Heart left ventricle (tissue), 16 donors: ENCODE measurements at regions of chr4 and their contacts with region 1.

Region 1: GRCh38 chr4:158768555-158769174 is at the start of gene FNIP2:
- DNase-seq: peak; percentile 86 to 92 (median 90)
- ATAC-seq: peak; percentile 89 to 97 (median 94)
- H3K4me3 ChIP-seq: peak within 1 kb of the TSS; percentile 70 to 97 (median 92)
- H3K27ac ChIP-seq: peak within 1 kb of the TSS; percentile 83 to 95 (median 91)
- H3K4me1 ChIP-seq: peaks cover 7 to 58% (median 43%) of the 10 kb centered on the region in 12 donors
- H3K27me3 ChIP-seq: no peaks in the 10 kb centered on the region
- CTCF ChIP-seq: peak in 1 of 12 donors; percentile 6
- POLR2A ChIP-seq: peak in 1 of 2 donors; percentile 69
- total RNA-seq, gene FNIP2: 32.4 to 87.4 (median 44.7) TPM

Region 2: GRCh38 chr4:158722917-158723793 is 45.5 kb before region 1 on chr4 and contains the start of gene PPID:
- intact Hi-C with region 1: loop called in 2 of 10 experiments (anchors 5 kb)
- DNase-seq: peak; percentile 86 to 92 (median 89)
- ATAC-seq: peak; percentile 91 to 98 (median 98)
- H3K4me3 ChIP-seq: peak within 1 kb of the TSS; percentile 70 to 95 (median 85)
- H3K27ac ChIP-seq: peak within 1 kb of the TSS; percentile 76 to 96 (median 94)
- H3K4me1 ChIP-seq: peaks cover 0 to 18% (median 12%) of the 10 kb centered on the region in 12 donors
- H3K27me3 ChIP-seq: no peaks in the 10 kb centered on the region
- CTCF ChIP-seq: no peak
- POLR2A ChIP-seq: peak in 1 of 2 donors; percentile 70
- total RNA-seq, gene PPID: 24.1 to 43.4 (median 30.7) TPM

Region 3: DNA sequence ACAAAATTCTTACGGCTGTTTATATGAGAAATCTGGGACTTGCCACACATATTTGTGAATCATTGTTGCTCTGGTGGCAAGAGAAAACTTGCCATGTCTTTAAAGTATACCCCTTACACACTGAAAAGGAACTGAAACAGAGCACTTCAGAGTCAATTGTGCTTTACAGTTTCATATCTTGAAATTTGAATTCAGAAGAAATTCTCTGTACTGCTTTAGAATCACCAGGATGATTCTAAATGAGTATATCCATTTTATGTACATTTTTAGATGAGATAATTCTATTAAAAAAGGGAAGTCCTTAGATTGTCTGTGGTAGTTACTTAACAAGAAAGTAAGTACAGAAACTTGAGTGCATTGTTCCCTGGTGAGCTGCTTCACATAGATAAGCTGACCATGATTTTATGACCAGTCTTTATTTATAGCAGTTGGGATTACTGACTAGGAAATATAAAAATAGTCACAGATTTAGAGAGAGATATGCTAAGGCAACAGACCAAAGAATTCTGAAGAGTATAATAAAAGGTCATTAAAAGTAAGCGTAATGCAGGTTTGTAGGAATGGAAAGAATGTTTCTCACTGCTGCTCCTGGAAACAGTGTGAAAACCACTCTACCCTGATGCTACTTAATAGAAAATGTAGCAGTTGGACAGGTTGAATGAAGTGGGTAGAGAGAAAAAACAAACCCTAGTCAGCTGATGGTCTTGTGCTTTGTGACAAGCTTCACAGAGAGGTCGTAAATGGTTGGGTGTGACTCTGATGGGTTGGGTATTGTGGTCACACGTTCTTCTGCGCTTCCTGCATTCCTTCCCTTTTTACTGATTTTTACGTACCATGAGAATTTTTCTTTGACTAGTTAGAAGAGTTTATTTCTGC is 41.2 kb after region 1 on chr4:
- intact Hi-C with region 1: loop called in 7 of 10 experiments (anchors 2 to 5 kb)
- DNase-seq: peak in 1 of 5 donors; percentile 38
- ATAC-seq: peak; percentile 40 to 73 (median 56)
- H3K4me3 ChIP-seq: peak overlapping the region in 8 of 12 donors; percentile 1 to 22 (median 6)
- H3K27ac ChIP-seq: peak overlapping the region; percentile 60 to 91 (median 82)
- H3K4me1 ChIP-seq: peaks cover 12 to 94% (median 74%) of the 10 kb centered on the region in 12 donors
- H3K27me3 ChIP-seq: no peaks in the 10 kb centered on the region
- CTCF ChIP-seq: no peak
- POLR2A ChIP-seq: no peak

Region 4: GRCh38 chr4:158845311-158846041 is 76.8 kb after region 1 on chr4:
- intact Hi-C with region 1: loop called in 7 of 10 experiments (anchors 2 to 5 kb)
- DNase-seq: no peak
- ATAC-seq: no peak
- H3K4me3 ChIP-seq: peak overlapping the region in 4 of 12 donors; percentile 3 to 57 (median 26)
- H3K27ac ChIP-seq: peak overlapping the region in 1 of 12 donors; percentile 2
- H3K4me1 ChIP-seq: peaks cover 0 to 46% (median 5%) of the 10 kb centered on the region in 12 donors
- H3K27me3 ChIP-seq: no peaks in the 10 kb centered on the region
- CTCF ChIP-seq: no peak
- POLR2A ChIP-seq: no peak